Thyroid gland (tissue), 4 donors: ENCODE measurements at regions of chr2 and their contacts with region 1.

Region 1: GRCh38 chr2:201231781-201232466 is 28.4 kb upstream of the CASP8 start:
- DNase-seq: peak; percentile 100
- H3K4me3 ChIP-seq: no peak overlapping the region
- H3K27ac ChIP-seq: peak overlapping the region in 2 of 3 donors; percentile 47 to 68
- H3K4me1 ChIP-seq: peaks cover 8% of the 10 kb centered on the region in 2 donors
- H3K27me3 ChIP-seq: no peaks in the 10 kb centered on the region
- CTCF ChIP-seq: peak; percentile 90 to 97 (median 95)
- POLR2A ChIP-seq: no peak

Region 2: DNA sequence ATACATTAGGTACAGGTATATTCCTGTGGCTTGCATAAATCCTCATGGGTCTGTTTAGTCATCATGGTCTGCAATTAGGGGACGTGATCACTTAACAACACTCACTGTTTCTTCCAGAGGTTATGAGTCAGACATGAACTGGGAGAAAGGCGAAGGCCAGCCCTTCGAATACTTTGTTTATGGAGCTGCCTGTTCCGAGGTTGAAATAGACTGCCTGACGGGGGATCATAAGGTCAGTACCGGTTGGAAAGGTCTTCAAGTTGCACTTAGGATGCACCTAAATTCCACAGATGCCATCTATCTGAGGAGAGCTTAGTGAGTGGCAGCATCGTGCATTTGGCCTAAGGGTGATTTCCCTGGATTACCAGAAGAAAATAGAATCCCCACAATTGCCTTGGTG is 569.2 kb before region 1 on chr2:
- intact Hi-C with region 1: no loop called
- DNase-seq: no peak
- H3K4me3 ChIP-seq: no peak overlapping the region
- H3K27ac ChIP-seq: no peak overlapping the region
- H3K4me1 ChIP-seq: no peaks in the 10 kb centered on the region
- H3K27me3 ChIP-seq: no peaks in the 10 kb centered on the region
- CTCF ChIP-seq: no peak
- POLR2A ChIP-seq: no peak

Region 3: GRCh38 chr2:200901459-200902072 is 330.4 kb before region 1 on chr2:
- intact Hi-C with region 1: loop called (anchors 5 kb)
- DNase-seq: peak; percentile 66 to 70
- H3K4me3 ChIP-seq: no peak overlapping the region
- H3K27ac ChIP-seq: no peak overlapping the region
- H3K4me1 ChIP-seq: no peaks in the 10 kb centered on the region
- H3K27me3 ChIP-seq: no peaks in the 10 kb centered on the region
- CTCF ChIP-seq: peak in 5 of 6 experiments; percentile 50 to 87 (median 70)
- POLR2A ChIP-seq: no peak

Region 4: GRCh38 chr2:201040867-201041628 is 190.9 kb before region 1 on chr2:
- intact Hi-C with region 1: no loop called
- DNase-seq: no peak
- H3K4me3 ChIP-seq: no peak overlapping the region
- H3K27ac ChIP-seq: no peak overlapping the region
- H3K4me1 ChIP-seq: no peaks in the 10 kb centered on the region
- H3K27me3 ChIP-seq: no peaks in the 10 kb centered on the region
- CTCF ChIP-seq: no peak
- POLR2A ChIP-seq: no peak

Region 5: GRCh38 chr2:201182650-201183364 is 49.1 kb before region 1 on chr2 and contains the start of gene CASP10:
- intact Hi-C with region 1: loop called (anchors 2 kb)
- DNase-seq: no peak
- H3K4me3 ChIP-seq: peak within 1 kb of the TSS in 2 of 3 donors; percentile 35 to 51
- H3K27ac ChIP-seq: peak within 1 kb of the TSS; percentile 17 to 63 (median 54)
- H3K4me1 ChIP-seq: peaks cover 12 to 16% of the 10 kb centered on the region in 2 donors
- H3K27me3 ChIP-seq: no peaks in the 10 kb centered on the region
- CTCF ChIP-seq: peak in 5 of 6 experiments; percentile 10 to 76 (median 63)
- POLR2A ChIP-seq: peak in 1 of 2 donors; percentile 69
- total RNA-seq, gene CASP10: 12.4 to 23.0 (median 20.0) TPM

Region 6: DNA sequence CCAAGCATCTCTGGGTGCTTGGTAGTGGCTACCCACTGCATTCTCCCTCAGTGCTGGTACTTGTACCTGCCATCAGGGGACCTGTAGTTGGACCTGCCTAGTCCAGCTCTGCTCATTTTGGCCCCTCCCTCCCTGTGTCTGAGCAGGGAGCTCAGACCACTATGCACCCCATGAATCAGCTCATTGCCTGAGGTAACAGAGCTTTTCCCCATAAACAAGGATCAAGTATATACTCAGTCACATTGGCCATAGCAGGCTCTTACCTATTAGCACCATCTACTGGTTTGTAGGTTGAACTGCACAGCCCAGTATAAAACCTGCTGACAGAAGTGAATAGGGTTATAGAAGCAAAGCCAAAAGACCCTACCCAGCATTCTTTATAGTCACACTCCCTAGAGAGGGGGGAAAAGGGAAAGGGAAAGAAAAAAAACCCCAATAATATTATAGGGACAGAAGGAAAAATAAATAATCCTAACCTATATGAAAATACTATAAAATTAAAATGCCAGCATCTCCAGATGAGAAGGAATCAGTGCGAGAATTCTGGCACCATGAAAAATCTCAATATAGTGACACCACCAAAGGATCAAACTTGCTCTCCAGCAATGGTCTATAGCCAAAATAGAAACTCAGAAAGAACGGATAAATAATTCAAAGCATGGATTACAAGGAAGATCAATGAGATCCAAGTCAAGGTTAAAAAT is 132.1 kb after region 1 on chr2:
- intact Hi-C with region 1: loop called (anchors 5 kb)
- DNase-seq: peak in 1 of 2 donors; percentile 12
- H3K4me3 ChIP-seq: no peak overlapping the region
- H3K27ac ChIP-seq: no peak overlapping the region
- H3K4me1 ChIP-seq: peaks cover 0 to 4% of the 10 kb centered on the region in 2 donors
- H3K27me3 ChIP-seq: no peaks in the 10 kb centered on the region
- CTCF ChIP-seq: peak; percentile 47 to 83 (median 76)
- POLR2A ChIP-seq: no peak

Region 7: GRCh38 chr2:201383156-201383555 is 151.2 kb after region 1 on chr2:
- intact Hi-C with region 1: no loop called
- DNase-seq: no peak
- H3K4me3 ChIP-seq: no peak overlapping the region
- H3K27ac ChIP-seq: no peak overlapping the region
- H3K4me1 ChIP-seq: no peaks in the 10 kb centered on the region
- H3K27me3 ChIP-seq: no peaks in the 10 kb centered on the region
- CTCF ChIP-seq: no peak
- POLR2A ChIP-seq: no peak

Region 8: GRCh38 chr2:201451292-201452057 is 219.6 kb after region 1 on chr2 and contains the starts of genes STRADB and TRAK2:
- intact Hi-C with region 1: loop called (anchors 10 kb)
- DNase-seq: peak; percentile 94 to 95
- H3K4me3 ChIP-seq: peak within 1 kb of the TSS; percentile 85 to 93 (median 88)
- H3K27ac ChIP-seq: peak within 1 kb of the TSS; percentile 75 to 93 (median 90)
- H3K4me1 ChIP-seq: peaks cover 26 to 37% of the 10 kb centered on the region in 2 donors
- H3K27me3 ChIP-seq: no peaks in the 10 kb centered on the region
- CTCF ChIP-seq: peak in 4 of 6 experiments; percentile 28 to 48 (median 36)
- POLR2A ChIP-seq: peak; percentile 65 to 92
- total RNA-seq, gene STRADB: 25.6 to 41.9 (median 31.4) TPM
- total RNA-seq, gene TRAK2: 71.7 to 89.6 (median 79.7) TPM

Region 9: DNA sequence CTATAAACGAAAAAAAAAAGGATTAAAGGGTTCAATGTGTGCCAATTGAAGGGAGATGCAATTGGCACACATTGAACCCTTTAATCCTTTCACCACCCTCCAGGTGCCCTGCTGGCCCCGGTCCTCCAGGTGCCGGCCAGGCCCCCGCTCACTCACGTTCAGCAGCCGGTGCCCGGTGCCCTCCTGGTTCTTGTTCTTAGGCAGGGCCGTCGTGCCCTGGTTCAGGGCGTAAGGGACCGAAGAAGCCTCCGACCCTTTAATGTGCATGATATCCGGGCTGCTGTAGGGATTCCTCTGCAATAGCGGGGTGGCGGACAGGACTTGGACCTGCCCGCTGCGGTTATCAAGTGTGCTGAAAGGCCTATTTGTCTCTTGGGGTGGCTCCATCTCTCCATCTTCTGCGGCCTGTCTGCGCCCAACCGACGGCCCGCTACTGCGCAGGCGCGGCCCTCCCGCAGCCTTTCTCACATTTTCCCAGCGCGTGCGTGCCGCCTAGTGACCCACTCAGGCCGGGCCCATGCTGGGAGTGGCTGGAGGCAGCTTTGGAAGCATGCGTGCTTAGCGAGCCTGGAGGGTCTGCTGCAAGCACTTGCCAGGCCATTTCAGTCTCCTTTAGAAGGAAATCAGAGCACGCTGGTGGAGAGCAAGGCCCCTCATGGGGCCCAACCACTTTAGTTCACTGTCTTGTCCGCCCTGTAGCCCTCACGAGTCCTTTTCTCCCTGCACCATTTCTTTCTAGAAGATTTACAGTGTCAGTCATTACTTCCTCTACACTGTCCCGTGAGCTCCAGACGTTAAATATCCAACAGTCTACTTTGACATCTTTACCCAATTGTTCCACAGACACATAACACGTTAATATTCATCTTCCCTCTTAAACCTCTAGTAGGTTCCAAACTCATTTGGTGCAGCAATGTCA is 387.1 kb after region 1 on chr2:
- intact Hi-C with region 1: loop called (anchors 5 kb)
- DNase-seq: peak; percentile 81 to 85
- H3K4me3 ChIP-seq: no peak overlapping the region
- H3K27ac ChIP-seq: no peak overlapping the region
- H3K4me1 ChIP-seq: peaks cover 0 to 5% of the 10 kb centered on the region in 2 donors
- H3K27me3 ChIP-seq: no peaks in the 10 kb centered on the region
- CTCF ChIP-seq: peak in 5 of 6 experiments; percentile 13 to 69 (median 51)
- POLR2A ChIP-seq: no peak